ENCODE measurements at regions of chr14 and their contacts with region 1.

Region 1: GRCh38 chr14:73295198-73295796 is 58.0 kb downstream of the PAPLN start:
- DNase-seq: no peak
- H3K4me3 Mint-ChIP-seq: no peak overlapping the region
- H3K27ac Mint-ChIP-seq: no peak overlapping the region
- H3K4me1 Mint-ChIP-seq: peaks cover 12% of the 10 kb centered on the region
- H3K27me3 Mint-ChIP-seq: no peaks in the 10 kb centered on the region

Region 2: GRCh38 chr14:73305499-73305898 is 10.2 kb after region 1 on chr14:
- CTCF ChIA-PET with region 1: interaction called, 18 read pairs
- POLR2A ChIA-PET with region 1: no interaction called
- intact Hi-C with region 1: no loop called
- DNase-seq: no peak
- H3K4me3 Mint-ChIP-seq: no peak overlapping the region
- H3K27ac Mint-ChIP-seq: no peak overlapping the region
- H3K4me1 Mint-ChIP-seq: peaks cover 7% of the 10 kb centered on the region
- H3K27me3 Mint-ChIP-seq: no peaks in the 10 kb centered on the region

Region 3: DNA sequence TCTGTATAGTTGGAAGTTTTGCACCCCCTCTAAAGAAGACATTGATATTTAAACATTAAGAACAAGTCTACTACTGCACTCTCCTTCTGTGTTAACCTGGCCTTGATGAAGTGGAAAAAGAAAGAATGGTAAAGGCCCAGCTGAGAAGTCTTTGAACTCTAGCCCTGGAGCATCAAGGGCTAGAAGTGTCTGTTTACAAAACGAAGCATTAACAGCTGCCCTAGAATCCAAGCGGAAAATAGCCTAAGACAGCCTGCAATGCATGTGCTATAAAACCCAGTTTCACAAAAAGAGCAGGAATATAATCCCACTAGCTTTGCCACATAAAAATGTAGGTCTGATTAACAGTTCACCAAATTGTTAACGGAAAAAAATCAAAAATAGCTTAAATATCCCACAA is 102.5 kb after region 1 on chr14:
- CTCF ChIA-PET with region 1: interaction called, 3 read pairs
- POLR2A ChIA-PET with region 1: no interaction called
- intact Hi-C with region 1: loop called (anchors 10 kb)
- DNase-seq: no peak
- H3K4me3 Mint-ChIP-seq: no peak overlapping the region
- H3K27ac Mint-ChIP-seq: no peak overlapping the region
- H3K4me1 Mint-ChIP-seq: peaks cover 14% of the 10 kb centered on the region
- H3K27me3 Mint-ChIP-seq: no peaks in the 10 kb centered on the region

Region 4: DNA sequence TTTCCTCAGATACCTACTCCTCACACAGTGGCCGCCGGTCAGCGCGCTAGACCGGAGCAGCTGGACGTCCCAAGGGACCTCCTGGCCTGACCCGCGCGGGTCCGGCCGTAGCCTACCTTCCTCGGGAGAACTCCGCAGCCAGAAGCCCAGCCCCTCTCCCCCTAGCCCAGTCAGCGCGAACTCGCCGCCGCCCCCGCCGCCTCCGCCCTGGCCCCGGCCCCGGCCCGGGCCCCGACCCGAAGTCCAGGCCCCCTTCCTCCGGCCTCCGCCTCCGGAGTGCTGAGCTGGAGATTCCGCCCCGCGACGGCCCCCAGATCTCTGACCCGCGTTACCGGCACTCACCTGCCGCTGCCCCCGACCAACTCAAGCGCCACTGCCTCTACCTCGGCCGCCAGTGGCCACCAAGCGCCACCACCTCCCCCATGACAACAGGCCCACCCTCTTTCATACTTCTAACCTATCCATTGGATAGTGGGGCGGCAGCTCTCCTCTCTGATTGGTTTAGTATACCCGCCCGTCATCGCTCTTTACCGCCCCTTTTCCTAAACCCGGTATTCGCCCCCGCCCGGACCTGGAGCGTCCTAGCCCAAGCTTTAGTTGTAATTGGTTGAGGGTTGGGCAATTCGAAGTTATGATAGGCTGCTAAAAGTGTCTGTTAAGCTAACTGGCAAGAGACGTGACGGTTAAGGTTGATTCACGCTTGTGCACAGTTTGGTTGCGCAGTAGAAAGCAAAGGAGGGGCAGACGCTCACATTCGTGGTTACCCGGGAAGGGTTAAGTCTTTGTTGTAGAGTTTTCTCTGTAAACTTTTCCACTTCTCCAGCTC is 163.1 kb after region 1 on chr14 and contains the start of gene NUMB:
- CTCF ChIA-PET with region 1: interaction called, 31 read pairs
- POLR2A ChIA-PET with region 1: interaction called, 5 read pairs
- intact Hi-C with region 1: loop called (anchors 2 kb)
- DNase-seq: peak; percentile 98
- H3K4me3 Mint-ChIP-seq: peak within 1 kb of the TSS; percentile 100
- H3K27ac Mint-ChIP-seq: peak within 1 kb of the TSS; percentile 94
- H3K4me1 Mint-ChIP-seq: peaks cover 44% of the 10 kb centered on the region
- H3K27me3 Mint-ChIP-seq: no peaks in the 10 kb centered on the region
- total RNA-seq, gene NUMB: 45.0 to 46.9 TPM

Region 5: GRCh38 chr14:73472185-73473114 is 177.2 kb after region 1 on chr14:
- CTCF ChIA-PET with region 1: interaction called, 167 read pairs
- POLR2A ChIA-PET with region 1: interaction called, 5 read pairs
- intact Hi-C with region 1: loop called (anchors 1 kb)
- DNase-seq: no peak
- H3K4me3 Mint-ChIP-seq: no peak overlapping the region
- H3K27ac Mint-ChIP-seq: no peak overlapping the region
- H3K4me1 Mint-ChIP-seq: peaks cover 17% of the 10 kb centered on the region
- H3K27me3 Mint-ChIP-seq: no peaks in the 10 kb centered on the region

Measured in activated CD4-positive, alpha-beta memory T cell treated with anti-CD3 and anti-CD28 coated beads for 36 hours (primary cell).